ENCODE measurements at regions of chr19 and their contacts with region 1.

Region 1: GRCh38 chr19:8355631-8356402 is 8.1 kb upstream of the ANGPTL4 start:
- DNase-seq: peak; percentile 98
- ATAC-seq: peak; percentile 90
- H3K4me3 ChIP-seq: no peak overlapping the region
- H3K27ac ChIP-seq: no peak overlapping the region; the same call in 1 of the 2 replicates
- H3K4me1 ChIP-seq: no peaks in the 10 kb centered on the region
- H3K27me3 ChIP-seq: no peaks in the 10 kb centered on the region
- CTCF ChIP-seq: no peak
- POLR2A ChIP-seq: no peak
- RAD21 ChIP-seq: peak; percentile 18

Region 2: GRCh38 chr19:8396563-8397203 is 40.9 kb after region 1 on chr19:
- CTCF ChIA-PET with region 1: no interaction called
- POLR2A ChIA-PET with region 1: no interaction called
- dilution Hi-C with region 1: no loop called
- in situ Hi-C with region 1: loop called (anchors 5 kb)
- intact Hi-C with region 1: loop called (anchors 1 kb)
- DNase-seq: peak; percentile 39
- ATAC-seq: peak; percentile 74
- H3K4me3 ChIP-seq: no peak overlapping the region
- H3K27ac ChIP-seq: no peak overlapping the region
- H3K4me1 ChIP-seq: peaks cover 11% of the 10 kb centered on the region
- H3K27me3 ChIP-seq: no peaks in the 10 kb centered on the region
- CTCF ChIP-seq: peak; percentile 67
- POLR2A ChIP-seq: no peak
- RAD21 ChIP-seq: peak; percentile 73

Region 3: GRCh38 chr19:8473648-8474476 is 118.0 kb after region 1 on chr19:
- CTCF ChIA-PET with region 1: no interaction called
- POLR2A ChIA-PET with region 1: no interaction called
- dilution Hi-C with region 1: no loop called
- in situ Hi-C with region 1: no loop called
- intact Hi-C with region 1: loop called (anchors 2 kb)
- DNase-seq: no peak
- ATAC-seq: no peak
- H3K4me3 ChIP-seq: no peak overlapping the region
- H3K27ac ChIP-seq: no peak overlapping the region
- H3K4me1 ChIP-seq: peaks cover 7% of the 10 kb centered on the region
- H3K27me3 ChIP-seq: no peaks in the 10 kb centered on the region
- CTCF ChIP-seq: no peak
- POLR2A ChIP-seq: no peak
- RAD21 ChIP-seq: no peak

Region 4: GRCh38 chr19:8663920-8664670 is 308.3 kb after region 1 on chr19:
- CTCF ChIA-PET with region 1: no interaction called
- POLR2A ChIA-PET with region 1: no interaction called
- dilution Hi-C with region 1: no loop called
- in situ Hi-C with region 1: no loop called
- intact Hi-C with region 1: no loop called
- DNase-seq: no peak
- ATAC-seq: no peak
- H3K4me3 ChIP-seq: no peak overlapping the region
- H3K27ac ChIP-seq: no peak overlapping the region
- H3K4me1 ChIP-seq: no peaks in the 10 kb centered on the region
- H3K27me3 ChIP-seq: peaks cover 3% of the 10 kb centered on the region; the same call in 1 of the 2 replicates
- CTCF ChIP-seq: no peak
- POLR2A ChIP-seq: no peak
- RAD21 ChIP-seq: no peak